ENCODE measurements at regions of chr16 and their contacts with region 1.

Region 1: DNA sequence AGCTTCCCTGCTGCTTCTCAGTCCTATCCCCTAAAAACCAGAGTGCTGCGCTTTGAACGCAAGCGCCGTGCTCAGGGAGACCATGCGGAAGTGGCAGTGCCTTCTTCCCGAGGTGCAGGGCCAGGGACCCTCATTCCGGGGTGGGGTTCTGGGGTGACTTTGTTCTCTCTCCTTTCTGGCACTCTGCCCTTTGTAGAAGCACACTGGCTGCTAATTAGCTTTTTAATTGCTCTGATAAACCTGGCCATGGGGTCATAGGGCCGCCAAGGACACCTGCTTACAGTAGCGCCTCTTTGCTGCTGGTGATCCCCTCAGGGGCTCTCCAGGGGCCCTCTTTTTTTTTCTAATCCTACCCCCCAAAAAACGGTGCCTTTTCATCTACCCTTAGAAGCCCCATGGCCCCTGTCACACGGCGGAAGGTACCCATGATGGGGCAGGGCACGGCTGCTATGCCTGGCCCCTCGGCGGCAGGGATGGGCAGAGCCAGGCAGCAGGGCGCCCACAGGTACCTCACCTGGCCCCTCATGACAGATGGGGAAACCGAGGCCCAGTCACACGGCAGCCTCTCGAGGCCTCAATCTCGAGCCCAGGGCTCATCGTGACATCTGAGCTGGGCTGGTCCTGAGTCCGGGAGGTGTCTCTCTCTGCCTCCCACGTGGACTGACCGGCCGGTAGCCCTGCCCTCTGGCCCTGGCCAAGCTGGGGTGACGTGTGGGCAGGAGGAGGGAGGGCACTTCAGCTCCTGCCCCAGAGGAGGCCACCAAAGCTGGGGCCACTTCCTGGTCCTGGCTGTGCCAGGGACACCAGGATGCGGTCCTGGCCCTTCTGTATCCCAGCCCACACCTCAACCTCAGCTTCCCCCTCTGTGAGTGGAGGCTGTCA is 11.4 kb downstream of the TRAF7 start:
- DNase-seq: no peak
- H3K4me3 ChIP-seq: no peak overlapping the region
- H3K27ac ChIP-seq: no peak overlapping the region
- H3K4me1 ChIP-seq: peaks cover 0 to 20% (median 0%) of the 10 kb centered on the region in 4 donors
- H3K27me3 ChIP-seq: no peaks in the 10 kb centered on the region
- CTCF ChIP-seq: no peak

Region 2: DNA sequence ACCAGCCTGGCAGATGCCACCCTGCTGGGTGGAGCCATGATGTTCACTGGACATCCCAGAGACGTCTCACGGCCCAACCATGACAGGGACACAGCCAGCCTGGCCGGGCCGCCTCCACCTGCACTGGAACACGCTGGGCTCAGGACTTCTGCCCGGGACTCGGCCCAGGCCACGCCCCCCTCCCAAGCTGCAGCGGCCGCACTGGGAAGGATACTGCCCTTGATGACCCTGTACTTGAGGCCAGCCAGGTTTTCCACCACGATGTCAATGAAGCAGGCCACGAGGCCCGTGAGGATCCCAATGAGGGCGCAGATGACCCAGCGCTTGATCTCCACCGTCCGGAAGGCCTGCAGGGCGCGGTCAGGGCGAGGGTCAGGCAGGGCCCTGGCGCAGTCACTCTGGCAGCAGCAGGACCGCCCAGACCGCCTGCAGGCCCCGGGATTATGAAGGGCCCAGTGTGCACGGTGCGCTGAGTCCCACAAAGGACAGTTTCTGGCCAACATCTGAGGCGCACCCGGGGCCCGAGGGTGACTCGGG is 706.3 kb before region 1 on chr16:
- intact Hi-C with region 1: loop called (anchors 5 kb)
- DNase-seq: no peak
- H3K4me3 ChIP-seq: no peak overlapping the region
- H3K27ac ChIP-seq: no peak overlapping the region
- H3K4me1 ChIP-seq: no peaks in the 10 kb centered on the region
- H3K27me3 ChIP-seq: no peaks in the 10 kb centered on the region
- CTCF ChIP-seq: no peak

Measured in tibial artery (tissue), 4 donors.